ENCODE measurements at regions of chr9 and their contacts with region 1.

Region 1: GRCh38 chr9:32384364-32385151 is at the start of gene ACO1:
- DNase-seq: peak; percentile 91 to 94
- ATAC-seq: peak; percentile 98 to 99 (median 98)
- H3K4me3 ChIP-seq: peak within 1 kb of the TSS; percentile 57 to 99 (median 82)
- H3K27ac ChIP-seq: peak within 1 kb of the TSS; percentile 14 to 95 (median 87)
- H3K4me1 ChIP-seq: peaks cover 0 to 41% (median 24%) of the 10 kb centered on the region in 9 donors
- H3K27me3 ChIP-seq: peaks cover 0 to 13% (median 0%) of the 10 kb centered on the region in 7 donors
- CTCF ChIP-seq: peak in 2 of 9 donors; percentile 40 to 42
- total RNA-seq, gene ACO1: 55.2 to 77.6 (median 66.3) TPM

Region 2: DNA sequence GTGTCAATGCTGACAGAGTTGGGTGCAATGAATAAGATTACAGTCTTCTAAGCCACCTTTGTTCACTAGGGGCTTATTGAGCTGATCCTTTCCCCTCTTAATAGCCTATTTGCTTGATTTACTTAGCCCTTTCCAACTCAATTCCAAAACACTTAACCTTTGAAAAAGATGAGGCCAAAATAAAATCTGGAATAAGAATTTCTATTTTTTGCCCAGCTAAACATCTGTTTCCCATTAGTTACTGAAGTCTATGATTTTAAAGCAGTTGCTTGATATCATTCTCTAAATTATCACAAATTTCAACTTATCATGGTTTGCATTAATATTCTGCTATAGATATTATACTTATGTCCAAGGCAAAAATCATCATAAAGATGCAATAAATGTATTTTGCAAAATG is 1272.1 kb before region 1 on chr9:
- intact Hi-C with region 1: no loop called
- DNase-seq: no peak
- ATAC-seq: no peak
- H3K4me3 ChIP-seq: no peak overlapping the region
- H3K27ac ChIP-seq: no peak overlapping the region
- H3K4me1 ChIP-seq: no peaks in the 10 kb centered on the region
- H3K27me3 ChIP-seq: no peaks in the 10 kb centered on the region
- CTCF ChIP-seq: no peak

Region 3: DNA sequence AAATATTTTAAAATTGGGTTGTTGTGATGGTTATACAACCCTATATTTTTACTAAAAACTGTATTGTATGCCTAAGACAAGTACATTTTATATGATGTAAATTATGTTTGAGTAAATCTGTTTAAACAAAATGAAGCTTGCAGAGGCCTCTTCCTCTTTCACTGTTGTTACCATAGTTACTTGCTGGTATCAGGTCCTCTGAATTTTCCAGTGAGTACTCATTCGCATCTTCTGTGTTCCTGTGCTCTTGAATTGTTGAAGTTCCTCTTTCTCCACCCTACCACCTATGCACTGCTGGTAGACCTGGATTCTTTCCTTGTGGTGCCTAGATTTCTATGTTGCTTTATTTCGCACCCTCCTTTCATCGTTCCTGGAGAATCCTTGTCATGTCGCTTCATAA is 938.6 kb before region 1 on chr9:
- intact Hi-C with region 1: no loop called
- DNase-seq: no peak
- ATAC-seq: no peak
- H3K4me3 ChIP-seq: no peak overlapping the region
- H3K27ac ChIP-seq: no peak overlapping the region
- H3K4me1 ChIP-seq: no peaks in the 10 kb centered on the region
- H3K27me3 ChIP-seq: no peaks in the 10 kb centered on the region
- CTCF ChIP-seq: no peak

Region 4: DNA sequence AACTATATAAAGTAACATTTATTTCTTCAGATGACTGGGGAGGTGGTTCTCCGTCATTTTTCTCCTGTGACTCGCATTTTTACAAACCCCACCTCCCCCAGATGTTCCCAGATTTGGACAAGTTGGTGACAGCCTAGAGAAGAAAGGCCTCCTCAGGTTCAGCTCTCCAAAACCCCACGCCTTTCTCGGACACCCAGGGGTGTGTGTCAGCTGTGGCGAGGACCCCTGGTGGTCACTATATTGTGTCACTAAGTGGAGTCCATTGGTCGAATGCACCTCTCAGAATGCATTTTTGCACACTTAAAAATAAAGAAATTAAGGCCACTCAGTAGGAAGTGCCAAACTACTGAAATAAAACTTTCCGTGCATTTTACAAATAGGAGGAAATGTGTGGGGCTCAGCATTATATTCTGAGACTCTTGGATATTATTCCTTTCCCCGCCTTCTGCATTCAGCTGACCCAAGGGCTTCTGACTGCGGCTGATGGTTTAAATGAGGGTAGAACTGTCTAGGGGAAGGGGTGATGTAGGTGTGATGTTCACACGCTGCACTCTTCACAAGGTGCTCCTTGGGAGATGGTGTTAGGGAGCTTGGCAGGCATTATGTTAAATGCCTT is 47.5 kb after region 1 on chr9:
- intact Hi-C with region 1: loop called (anchors 2 to 5 kb)
- DNase-seq: peak; percentile 23 to 28
- ATAC-seq: peak in 6 of 8 donors; percentile 55 to 71 (median 63)
- H3K4me3 ChIP-seq: no peak overlapping the region
- H3K27ac ChIP-seq: no peak overlapping the region
- H3K4me1 ChIP-seq: peaks cover 0 to 3% (median 0%) of the 10 kb centered on the region in 9 donors
- H3K27me3 ChIP-seq: no peaks in the 10 kb centered on the region
- CTCF ChIP-seq: peak; percentile 8 to 70 (median 58)

Region 5: DNA sequence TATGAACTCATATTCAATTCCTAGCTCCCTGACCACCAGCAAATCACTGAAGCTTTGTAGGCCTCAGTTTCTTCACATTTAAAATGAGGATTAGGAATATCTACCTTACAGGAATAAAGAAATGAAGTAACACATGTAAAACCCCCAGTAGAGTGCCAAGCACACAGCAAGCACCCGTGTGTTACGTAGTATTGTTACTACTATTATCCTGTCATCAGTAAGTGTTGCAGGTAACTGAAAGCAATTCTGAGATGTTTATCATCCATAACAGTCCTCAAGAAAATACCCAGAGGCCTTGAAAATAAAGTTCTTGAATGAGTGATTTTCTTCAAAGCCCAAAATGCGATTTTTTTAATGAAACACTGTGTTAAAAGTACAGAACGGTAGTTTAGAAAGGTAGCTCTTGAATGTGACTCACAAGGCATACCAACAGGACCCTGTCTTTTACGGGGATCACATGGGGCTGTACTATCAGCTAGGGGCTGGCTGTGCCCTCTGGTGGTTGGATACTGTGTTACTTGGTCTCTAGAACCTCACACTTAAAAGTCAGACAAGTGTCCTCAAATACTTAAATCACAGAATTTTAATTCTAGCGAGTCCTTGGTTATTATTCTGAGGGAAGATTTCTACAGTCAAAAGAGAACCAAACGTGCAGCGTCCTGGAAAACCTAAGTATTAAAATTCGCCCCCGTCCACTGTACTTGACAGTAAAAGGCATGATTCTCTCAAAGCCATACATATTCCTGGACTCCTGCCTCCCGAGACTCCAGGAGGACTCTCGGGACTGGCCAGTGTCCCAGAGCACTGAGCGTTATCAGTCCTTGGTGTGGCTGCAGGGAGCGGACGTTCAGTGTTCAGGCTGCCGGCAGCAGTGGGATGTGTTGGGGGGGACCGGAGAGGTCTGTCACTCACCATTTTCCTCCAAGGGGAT is 187.7 kb after region 1 on chr9:
- intact Hi-C with region 1: loop called in 4 of 10 experiments (anchors 1 to 5 kb)
- DNase-seq: peak; percentile 39 to 57
- ATAC-seq: peak; percentile 63 to 94 (median 88)
- H3K4me3 ChIP-seq: peak overlapping the region; percentile 58 to 92 (median 88)
- H3K27ac ChIP-seq: peak overlapping the region; percentile 85 to 94 (median 92)
- H3K4me1 ChIP-seq: peaks cover 0 to 31% (median 21%) of the 10 kb centered on the region in 9 donors
- H3K27me3 ChIP-seq: no peaks in the 10 kb centered on the region
- CTCF ChIP-seq: peak in 8 of 9 donors; percentile 19 to 67 (median 56)

Region 6: DNA sequence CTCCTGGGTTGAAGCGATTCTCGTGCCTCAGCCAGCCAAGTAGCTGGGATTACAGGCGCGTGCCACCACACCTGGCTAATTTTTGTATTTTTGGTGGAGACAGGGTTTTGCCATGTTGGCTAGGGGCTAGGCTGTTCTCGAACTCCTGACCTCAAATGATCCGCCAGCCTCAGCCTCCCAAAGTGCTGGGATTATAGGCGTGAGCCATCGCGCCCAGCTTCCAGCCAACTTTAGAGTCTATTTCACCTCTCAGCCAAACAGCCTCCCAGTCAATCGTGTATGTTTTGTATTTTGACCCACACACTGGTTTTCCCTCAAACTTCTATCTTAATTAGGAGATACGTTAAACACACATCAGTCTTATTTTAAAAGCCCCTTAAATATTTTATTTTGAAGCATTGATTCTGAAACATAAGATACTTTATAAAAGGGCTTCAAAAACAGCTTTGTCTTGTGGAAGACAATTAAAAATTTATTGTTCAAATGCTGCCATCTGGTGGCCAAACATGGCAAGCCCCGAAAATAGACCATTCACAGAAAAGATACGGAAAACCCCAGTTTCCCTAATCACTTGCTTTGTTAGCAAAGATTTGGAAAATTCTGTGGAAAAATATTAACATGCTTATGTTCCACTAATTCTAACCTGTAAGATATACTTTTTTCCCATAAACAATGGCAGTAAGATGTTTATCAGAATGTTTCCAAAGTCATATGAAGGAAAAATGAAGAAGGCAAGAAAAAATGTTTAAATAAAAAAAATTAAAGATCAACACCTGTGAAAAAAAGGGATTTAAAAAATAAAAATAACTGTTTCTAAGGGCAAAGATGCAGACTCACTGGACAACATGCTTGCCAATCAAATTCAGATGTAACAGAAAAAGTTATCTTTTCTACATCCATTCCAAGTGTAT is 583.8 kb after region 1 on chr9:
- intact Hi-C with region 1: loop called (anchors 2 to 10 kb)
- DNase-seq: peak; percentile 35 to 46
- ATAC-seq: no peak
- H3K4me3 ChIP-seq: no peak overlapping the region
- H3K27ac ChIP-seq: no peak overlapping the region
- H3K4me1 ChIP-seq: no peaks in the 10 kb centered on the region
- H3K27me3 ChIP-seq: no peaks in the 10 kb centered on the region
- CTCF ChIP-seq: peak; percentile 73 to 91 (median 85)

Measured in heart right ventricle (tissue), 16 donors.